ENCODE measurements at regions of chr5 and their contacts with region 1.

Region 1: GRCh38 chr5:121218086-121218485 is 633.6 kb upstream of the FTMT start:
- DNase-seq: no peak
- ATAC-seq: no peak
- H3K4me3 ChIP-seq: no peak overlapping the region
- H3K27ac ChIP-seq: no peak overlapping the region
- H3K4me1 ChIP-seq: no peaks in the 10 kb centered on the region
- H3K27me3 ChIP-seq: no peaks in the 10 kb centered on the region
- CTCF ChIP-seq: no peak
- POLR2A ChIP-seq: no peak
- RAD21 ChIP-seq: no peak

Region 2: DNA sequence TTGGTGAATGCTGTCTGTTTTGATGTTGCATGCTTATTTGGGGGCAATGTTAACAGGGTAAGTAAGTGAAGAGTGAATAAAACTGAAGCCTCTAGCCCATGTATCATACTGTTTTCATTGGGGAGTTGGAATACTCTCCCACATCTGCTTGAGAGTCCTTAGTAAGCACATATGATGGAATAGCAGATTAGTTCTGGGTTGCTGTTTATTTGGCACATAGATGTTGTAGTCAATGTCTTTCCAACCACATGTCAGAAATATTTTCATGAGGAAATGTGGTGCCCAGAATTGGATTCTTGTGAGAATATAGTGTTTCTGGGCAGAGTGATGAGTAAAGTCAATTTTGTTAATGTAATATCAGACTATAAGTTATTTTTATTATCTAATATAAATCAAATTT is 21.9 kb after region 1 on chr5:
- CTCF ChIA-PET with region 1: no interaction called
- POLR2A ChIA-PET with region 1: no interaction called
- RAD21 ChIA-PET with region 1: no interaction called
- intact Hi-C with region 1: no loop called
- DNase-seq: no peak
- ATAC-seq: no peak
- H3K4me3 ChIP-seq: no peak overlapping the region
- H3K27ac ChIP-seq: no peak overlapping the region
- H3K4me1 ChIP-seq: no peaks in the 10 kb centered on the region
- H3K27me3 ChIP-seq: no peaks in the 10 kb centered on the region
- CTCF ChIP-seq: no peak
- POLR2A ChIP-seq: no peak
- RAD21 ChIP-seq: no peak

Region 3: DNA sequence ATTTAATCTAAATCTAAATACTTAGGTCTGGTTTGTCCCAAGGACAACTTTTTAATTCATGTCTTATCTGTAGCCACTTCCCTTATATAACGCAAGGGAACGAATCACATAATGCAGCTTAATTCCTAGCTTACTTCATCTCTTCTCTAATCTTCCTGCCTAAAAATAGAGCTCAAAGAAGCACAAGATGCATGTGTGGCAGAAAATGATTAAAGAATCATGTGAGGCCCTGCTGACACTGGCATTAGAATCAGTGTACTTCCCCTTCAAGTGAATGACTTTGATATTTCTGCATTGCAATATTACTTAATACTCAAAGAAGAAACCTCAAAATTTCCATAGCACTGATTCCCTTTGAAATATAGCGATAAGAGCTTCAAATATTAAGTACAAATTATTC is 315.7 kb after region 1 on chr5:
- CTCF ChIA-PET with region 1: no interaction called
- POLR2A ChIA-PET with region 1: no interaction called
- RAD21 ChIA-PET with region 1: no interaction called
- intact Hi-C with region 1: loop called (anchors 1 kb)
- DNase-seq: no peak
- ATAC-seq: no peak
- H3K4me3 ChIP-seq: no peak overlapping the region
- H3K27ac ChIP-seq: no peak overlapping the region
- H3K4me1 ChIP-seq: no peaks in the 10 kb centered on the region
- H3K27me3 ChIP-seq: no peaks in the 10 kb centered on the region
- CTCF ChIP-seq: no peak
- POLR2A ChIP-seq: no peak
- RAD21 ChIP-seq: no peak